Activated CD4-positive, alpha-beta memory T cell treated with anti-CD3 and anti-CD28 coated beads for 36 hours (primary cell): ENCODE measurements at regions of chr3 and their contacts with region 1.

Region 1: GRCh38 chr3:157064402-157064801 is 95.5 kb downstream of the CCNL1 start:
- DNase-seq: no peak
- H3K4me3 Mint-ChIP-seq: no peak overlapping the region
- H3K27ac Mint-ChIP-seq: no peak overlapping the region
- H3K4me1 Mint-ChIP-seq: peaks cover 26% of the 10 kb centered on the region
- H3K27me3 Mint-ChIP-seq: no peaks in the 10 kb centered on the region

Region 2: DNA sequence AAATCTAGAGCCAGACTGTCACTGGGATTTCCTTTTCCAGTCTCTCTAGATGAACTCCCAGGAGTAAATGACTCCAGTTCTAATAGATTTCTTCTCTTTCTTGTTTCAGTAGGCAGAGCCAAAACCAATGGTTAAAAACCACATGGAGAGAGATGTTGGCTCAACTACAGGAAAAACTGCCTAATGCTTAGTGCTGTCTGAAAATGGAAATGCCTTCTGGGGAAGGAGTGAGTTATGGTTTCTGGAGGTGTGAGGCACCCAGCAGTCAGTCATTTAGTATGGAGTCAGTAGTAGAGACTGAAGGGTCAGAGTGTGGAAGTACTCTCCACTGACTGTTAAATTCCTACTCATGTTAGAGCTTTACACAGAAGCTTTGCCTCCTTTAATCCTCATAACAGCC is 41.2 kb before region 1 on chr3:
- CTCF ChIA-PET with region 1: no interaction called
- POLR2A ChIA-PET with region 1: no interaction called
- intact Hi-C with region 1: loop called (anchors 5 kb)
- DNase-seq: no peak
- H3K4me3 Mint-ChIP-seq: no peak overlapping the region
- H3K27ac Mint-ChIP-seq: no peak overlapping the region
- H3K4me1 Mint-ChIP-seq: peaks cover 3% of the 10 kb centered on the region
- H3K27me3 Mint-ChIP-seq: peaks cover 3% of the 10 kb centered on the region

Region 3: GRCh38 chr3:157081681-157082210 is 17.3 kb after region 1 on chr3:
- CTCF ChIA-PET with region 1: interaction called, 12 read pairs
- POLR2A ChIA-PET with region 1: no interaction called
- intact Hi-C with region 1: no loop called
- DNase-seq: peak; percentile 90
- H3K4me3 Mint-ChIP-seq: no peak overlapping the region
- H3K27ac Mint-ChIP-seq: no peak overlapping the region
- H3K4me1 Mint-ChIP-seq: peaks cover 31% of the 10 kb centered on the region
- H3K27me3 Mint-ChIP-seq: no peaks in the 10 kb centered on the region